ENCODE measurements at regions of chrX and their contacts with region 1.

Region 1: GRCh38 chrX:70262952-70263567 is 3.1 kb upstream of the P2RY4 start:
- DNase-seq: peak; percentile 54
- H3K4me3 ChIP-seq: no peak overlapping the region
- H3K27ac ChIP-seq: no peak overlapping the region
- H3K4me1 ChIP-seq: no peaks in the 10 kb centered on the region
- H3K27me3 ChIP-seq: no peaks in the 10 kb centered on the region
- CTCF ChIP-seq: peak; percentile 70 to 85

Region 2: DNA sequence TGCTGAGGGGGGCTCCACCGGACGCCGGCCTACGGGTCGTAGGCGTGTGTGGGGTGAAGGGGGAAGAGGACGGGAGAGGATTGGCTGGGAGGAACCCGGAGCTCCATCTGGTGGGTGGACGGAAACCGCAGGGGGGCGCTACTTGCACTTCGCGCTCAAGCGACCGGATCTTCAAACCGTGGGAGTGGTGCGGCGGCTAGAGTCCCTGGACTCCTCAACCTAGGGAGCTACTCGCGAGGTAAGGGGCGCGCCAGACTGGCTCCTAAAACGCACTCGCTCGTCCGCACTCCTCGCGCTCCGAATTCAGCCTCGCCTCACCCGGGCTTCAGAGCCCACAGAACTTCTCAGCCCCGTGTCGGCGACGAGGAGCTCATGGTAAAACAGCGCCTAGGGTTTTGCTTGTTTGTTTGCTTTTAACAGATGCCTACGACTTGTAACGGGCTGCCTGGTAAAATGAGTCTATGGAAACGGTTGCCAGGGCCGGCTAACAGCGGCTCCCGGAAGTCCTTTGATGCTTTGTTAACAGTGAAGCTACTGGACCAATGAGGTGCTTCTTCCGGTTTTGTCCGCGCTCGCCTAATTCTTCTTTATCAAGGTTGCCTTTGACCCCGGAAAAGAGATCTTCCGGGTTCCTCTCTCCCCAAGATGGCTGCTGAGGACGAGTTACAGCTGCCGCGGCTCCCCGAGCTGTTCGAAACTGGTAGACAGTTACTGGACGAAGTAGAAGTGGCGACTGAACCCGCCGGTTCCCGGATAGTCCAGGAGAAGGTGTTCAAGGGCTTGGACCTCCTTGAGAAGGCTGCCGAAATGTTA is 129.6 kb before region 1 on chrX and contains the start of gene IGBP1:
- CTCF ChIA-PET with region 1: interaction called, 4 read pairs
- dilution Hi-C with region 1: no loop called
- in situ Hi-C with region 1: no loop called
- intact Hi-C with region 1: loop called (anchors 2 kb)
- DNase-seq: peak; percentile 79
- H3K4me3 ChIP-seq: peak within 1 kb of the TSS; percentile 59 to 82 (median 68)
- H3K27ac ChIP-seq: peak within 1 kb of the TSS; percentile 89
- H3K4me1 ChIP-seq: peaks cover 18% of the 10 kb centered on the region
- H3K27me3 ChIP-seq: no peaks in the 10 kb centered on the region
- CTCF ChIP-seq: peak; percentile 49 to 62
- total RNA-seq, gene IGBP1: 31.1 to 67.3 TPM

Region 3: DNA sequence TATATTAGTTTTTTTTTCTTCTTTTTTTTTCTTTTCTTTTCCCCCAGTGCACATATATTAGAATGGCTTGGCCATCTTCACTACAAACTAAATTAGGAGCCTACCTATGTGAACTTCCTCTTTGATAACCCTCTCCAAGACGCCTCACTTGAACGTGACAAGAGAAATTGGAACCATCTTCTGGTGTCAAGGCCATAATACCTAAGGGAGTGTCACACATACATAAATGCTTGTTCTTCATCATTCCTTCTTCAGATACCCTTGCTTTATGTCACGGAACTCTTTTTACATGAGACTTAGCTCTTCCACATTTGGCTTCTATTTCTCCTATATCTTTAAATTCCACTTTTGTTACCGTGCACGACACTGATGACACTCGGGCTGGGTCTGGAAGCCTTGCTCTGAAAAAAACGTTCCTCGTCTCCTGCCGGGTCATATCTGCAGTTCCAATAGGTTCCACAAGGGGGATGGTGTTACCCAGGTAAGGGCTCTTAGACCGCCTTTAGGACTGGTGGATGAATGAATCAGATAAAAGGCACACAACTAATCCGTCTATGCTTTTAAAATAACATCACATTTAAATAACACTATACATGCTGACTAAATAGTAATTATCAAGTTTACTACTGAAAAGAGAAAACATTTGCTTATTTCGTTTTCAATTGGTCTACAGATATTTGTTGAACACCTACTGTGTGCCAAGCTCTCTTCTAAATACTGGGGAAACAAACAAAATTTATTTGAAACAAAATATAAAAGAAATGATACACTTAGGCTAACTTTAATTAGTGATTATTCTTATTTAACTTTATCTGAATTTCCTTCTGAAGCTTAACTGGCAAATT is 65.9 kb before region 1 on chrX:
- CTCF ChIA-PET with region 1: no interaction called
- dilution Hi-C with region 1: no loop called
- in situ Hi-C with region 1: no loop called
- intact Hi-C with region 1: loop called (anchors 1 kb)
- DNase-seq: peak; percentile 55
- H3K4me3 ChIP-seq: no peak overlapping the region
- H3K27ac ChIP-seq: no peak overlapping the region
- H3K4me1 ChIP-seq: no peaks in the 10 kb centered on the region
- H3K27me3 ChIP-seq: no peaks in the 10 kb centered on the region
- CTCF ChIP-seq: peak; percentile 58 to 76

Region 4: GRCh38 chrX:70219938-70220767 is 42.9 kb before region 1 on chrX:
- CTCF ChIA-PET with region 1: no interaction called
- dilution Hi-C with region 1: no loop called
- in situ Hi-C with region 1: no loop called
- intact Hi-C with region 1: loop called (anchors 2 kb)
- DNase-seq: peak; percentile 63
- H3K4me3 ChIP-seq: no peak overlapping the region
- H3K27ac ChIP-seq: peak overlapping the region; percentile 32
- H3K4me1 ChIP-seq: peaks cover 5% of the 10 kb centered on the region
- H3K27me3 ChIP-seq: no peaks in the 10 kb centered on the region
- CTCF ChIP-seq: no peak

Region 5: GRCh38 chrX:70281951-70282350 is 18.9 kb after region 1 on chrX and contains the start of gene RAB41:
- CTCF ChIA-PET with region 1: no interaction called
- dilution Hi-C with region 1: no loop called
- in situ Hi-C with region 1: no loop called
- intact Hi-C with region 1: no loop called
- DNase-seq: no peak
- H3K4me3 ChIP-seq: no peak within 1 kb of the TSS
- H3K27ac ChIP-seq: no peak within 1 kb of the TSS
- H3K4me1 ChIP-seq: no peaks in the 10 kb centered on the region
- H3K27me3 ChIP-seq: no peaks in the 10 kb centered on the region
- CTCF ChIP-seq: no peak
- total RNA-seq, gene RAB41: not detected

Measured in mammary epithelial cell (primary cell).